Naive thymus-derived CD4-positive, alpha-beta T cell (primary cell): ENCODE measurements at regions of chr10 and their contacts with region 1.

Region 1: DNA sequence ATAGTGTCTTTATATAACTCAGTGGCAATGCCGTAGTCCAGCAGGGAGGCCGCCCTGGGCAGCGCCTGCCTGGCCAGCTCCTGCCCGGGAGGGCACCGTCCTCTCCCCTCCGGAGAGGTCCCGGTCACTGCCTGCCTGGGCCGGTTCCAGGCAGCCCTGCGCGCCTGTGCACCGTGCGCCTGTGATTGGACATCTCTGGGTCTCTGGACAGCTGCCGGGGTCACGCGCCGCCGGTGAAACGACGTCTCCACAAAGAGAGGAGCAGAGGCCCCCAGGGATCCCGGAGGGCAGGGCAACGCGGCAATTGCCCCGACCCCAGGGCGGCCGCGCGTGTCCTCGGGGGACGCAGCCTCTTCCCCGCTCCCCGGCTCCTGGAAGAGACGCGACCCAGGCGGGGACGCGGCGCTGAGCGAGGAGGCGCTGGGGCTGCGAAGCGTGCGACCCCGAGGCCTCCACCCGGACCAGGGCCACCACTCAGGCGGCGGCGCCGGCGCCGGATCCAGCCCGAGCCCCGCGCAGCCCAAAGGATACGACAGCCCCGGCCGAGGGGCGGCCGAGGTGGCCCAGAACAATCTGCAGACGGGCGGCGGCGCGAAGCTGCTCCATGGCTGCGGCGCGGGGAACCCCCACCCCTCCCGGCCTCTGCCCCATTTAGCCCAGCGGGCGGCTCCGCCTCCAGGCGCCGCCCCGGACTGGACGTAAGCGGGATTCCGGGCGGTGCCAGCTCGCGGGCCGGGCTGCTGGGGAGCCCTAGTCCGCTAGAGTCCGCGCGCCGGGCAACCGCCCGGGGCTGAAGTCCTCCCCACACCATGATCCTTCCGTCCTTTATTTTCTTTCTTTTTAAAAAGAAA is at the start of gene PHYH:
- DNase-seq: peak; percentile 70 to 88 (median 78)
- ATAC-seq: peak; percentile 77
- H3K4me3 ChIP-seq: peak within 1 kb of the TSS; percentile 69
- H3K4me3 Mint-ChIP-seq: peak within 1 kb of the TSS; percentile 70 to 96 (median 86)
- H3K27ac ChIP-seq: peak within 1 kb of the TSS; percentile 95
- H3K27ac Mint-ChIP-seq: peak within 1 kb of the TSS; percentile 92 to 99 (median 97)
- H3K4me1 ChIP-seq: peaks cover 16 to 19% of the 10 kb centered on the region in 2 donors
- H3K4me1 Mint-ChIP-seq: peaks cover 13 to 34% (median 22%) of the 10 kb centered on the region in 7 donors
- H3K27me3 ChIP-seq: no peaks in the 10 kb centered on the region
- H3K27me3 Mint-ChIP-seq: no peaks in the 10 kb centered on the region
- total RNA-seq, gene PHYH: 11.2 to 17.7 (median 13.2) TPM

Region 2: DNA sequence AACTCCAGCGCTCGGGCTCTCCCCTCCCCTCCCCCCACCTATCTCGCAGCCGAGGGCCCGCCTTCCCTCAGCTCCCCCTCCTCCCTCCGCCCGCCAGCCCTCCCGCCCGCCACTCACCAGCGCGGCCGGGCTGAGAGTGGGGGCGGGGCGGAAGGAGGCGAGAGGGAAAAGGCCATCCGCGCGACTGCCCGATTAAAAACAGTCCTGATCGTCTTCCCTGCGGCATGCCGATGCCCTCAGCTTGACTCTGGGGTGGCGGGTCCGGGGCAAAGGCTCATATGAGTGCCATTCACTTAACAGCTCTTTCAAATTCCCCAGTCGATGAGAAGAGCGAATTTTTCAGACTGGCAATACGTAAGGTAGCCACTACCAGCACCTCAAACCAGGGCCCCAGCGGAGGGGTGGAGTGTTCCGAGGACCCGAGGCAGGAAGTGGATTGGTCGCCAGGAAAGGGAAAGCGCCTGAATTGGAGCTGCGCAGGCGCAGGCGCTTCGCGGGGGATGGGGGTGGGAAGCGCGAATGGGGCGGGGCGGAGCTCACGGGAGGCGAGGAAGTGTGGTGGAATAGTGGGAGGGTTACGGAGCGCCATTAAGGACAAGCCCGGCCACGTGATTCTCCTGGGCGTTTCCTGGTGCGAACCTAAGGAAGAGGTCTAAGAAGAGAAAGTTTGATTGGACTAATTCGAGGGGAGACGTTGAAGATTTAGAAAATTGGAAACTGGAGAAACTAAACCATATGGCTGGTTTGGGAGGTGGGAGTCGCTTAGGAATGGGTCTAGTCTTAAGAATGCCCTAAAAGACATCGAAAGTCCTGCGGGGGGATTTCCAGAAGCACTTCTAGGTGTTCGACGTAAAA is 1256.6 kb before region 1 on chr10 and contains the start of gene UPF2:
- CTCF ChIA-PET with region 1: no interaction called
- POLR2A ChIA-PET with region 1: no interaction called
- intact Hi-C with region 1: loop called in 1 of 2 experiments (anchors 10 kb)
- DNase-seq: peak; percentile 95 to 98 (median 97)
- ATAC-seq: peak; percentile 93
- H3K4me3 ChIP-seq: peak within 1 kb of the TSS; percentile 83
- H3K4me3 Mint-ChIP-seq: peak within 1 kb of the TSS; percentile 87 to 100 (median 95)
- H3K27ac ChIP-seq: peak within 1 kb of the TSS; percentile 92
- H3K27ac Mint-ChIP-seq: peak within 1 kb of the TSS; percentile 98 to 100 (median 99)
- H3K4me1 ChIP-seq: peaks cover 10 to 16% of the 10 kb centered on the region in 2 donors
- H3K4me1 Mint-ChIP-seq: peaks cover 13 to 47% (median 40%) of the 10 kb centered on the region in 7 donors
- H3K27me3 ChIP-seq: no peaks in the 10 kb centered on the region
- H3K27me3 Mint-ChIP-seq: peaks cover 0 to 3% (median 0%) of the 10 kb centered on the region in 5 donors
- total RNA-seq, gene UPF2: 27.2 to 40.5 (median 36.3) TPM

Region 3: GRCh38 chr10:13115832-13116803 is 183.5 kb before region 1 on chr10:
- CTCF ChIA-PET with region 1: no interaction called
- POLR2A ChIA-PET with region 1: interaction called, 10 read pairs
- intact Hi-C with region 1: no loop called
- DNase-seq: peak in 1 of 9 donors; percentile 3
- ATAC-seq: peak; percentile 81
- H3K4me3 ChIP-seq: peak overlapping the region; percentile 8
- H3K4me3 Mint-ChIP-seq: peak overlapping the region in 6 of 10 donors; percentile 25 to 63 (median 54)
- H3K27ac ChIP-seq: peak overlapping the region; percentile 22
- H3K27ac Mint-ChIP-seq: peak overlapping the region; percentile 12 to 90 (median 67)
- H3K4me1 ChIP-seq: peaks cover 0 to 9% of the 10 kb centered on the region in 2 donors
- H3K4me1 Mint-ChIP-seq: peaks cover 0 to 34% (median 20%) of the 10 kb centered on the region in 7 donors
- H3K27me3 ChIP-seq: no peaks in the 10 kb centered on the region
- H3K27me3 Mint-ChIP-seq: no peaks in the 10 kb centered on the region

Region 4: GRCh38 chr10:13206546-13207443 is 92.9 kb before region 1 on chr10:
- CTCF ChIA-PET with region 1: interaction called, 13 read pairs
- POLR2A ChIA-PET with region 1: interaction called, 4 read pairs
- intact Hi-C with region 1: loop called (anchors 1 kb)
- DNase-seq: no peak
- ATAC-seq: no peak
- H3K4me3 ChIP-seq: no peak overlapping the region
- H3K4me3 Mint-ChIP-seq: no peak overlapping the region
- H3K27ac ChIP-seq: no peak overlapping the region
- H3K27ac Mint-ChIP-seq: no peak overlapping the region
- H3K4me1 ChIP-seq: no peaks in the 10 kb centered on the region
- H3K4me1 Mint-ChIP-seq: no peaks in the 10 kb centered on the region
- H3K27me3 ChIP-seq: no peaks in the 10 kb centered on the region
- H3K27me3 Mint-ChIP-seq: no peaks in the 10 kb centered on the region

Region 5: GRCh38 chr10:13276749-13277365 is 22.8 kb before region 1 on chr10:
- CTCF ChIA-PET with region 1: interaction called, 3 read pairs
- POLR2A ChIA-PET with region 1: interaction called, 10 read pairs
- intact Hi-C with region 1: loop called in 1 of 2 experiments (anchors 1 kb)
- DNase-seq: no peak
- ATAC-seq: no peak
- H3K4me3 ChIP-seq: no peak overlapping the region
- H3K4me3 Mint-ChIP-seq: no peak overlapping the region
- H3K27ac ChIP-seq: no peak overlapping the region
- H3K27ac Mint-ChIP-seq: peak overlapping the region in 2 of 9 donors; percentile 22 to 51
- H3K4me1 ChIP-seq: no peaks in the 10 kb centered on the region
- H3K4me1 Mint-ChIP-seq: peaks cover 0 to 2% (median 0%) of the 10 kb centered on the region in 7 donors
- H3K27me3 ChIP-seq: no peaks in the 10 kb centered on the region
- H3K27me3 Mint-ChIP-seq: no peaks in the 10 kb centered on the region